Heart left ventricle (tissue), 16 donors: ENCODE measurements at regions of chr1 and their contacts with region 1.

Region 1: GRCh38 chr1:50060279-50060678 is 36.5 kb upstream of the AGBL4 start:
- DNase-seq: no peak
- ATAC-seq: no peak
- H3K4me3 ChIP-seq: no peak overlapping the region
- H3K27ac ChIP-seq: no peak overlapping the region
- H3K4me1 ChIP-seq: no peaks in the 10 kb centered on the region
- H3K27me3 ChIP-seq: no peaks in the 10 kb centered on the region
- CTCF ChIP-seq: no peak
- POLR2A ChIP-seq: no peak

Region 2: DNA sequence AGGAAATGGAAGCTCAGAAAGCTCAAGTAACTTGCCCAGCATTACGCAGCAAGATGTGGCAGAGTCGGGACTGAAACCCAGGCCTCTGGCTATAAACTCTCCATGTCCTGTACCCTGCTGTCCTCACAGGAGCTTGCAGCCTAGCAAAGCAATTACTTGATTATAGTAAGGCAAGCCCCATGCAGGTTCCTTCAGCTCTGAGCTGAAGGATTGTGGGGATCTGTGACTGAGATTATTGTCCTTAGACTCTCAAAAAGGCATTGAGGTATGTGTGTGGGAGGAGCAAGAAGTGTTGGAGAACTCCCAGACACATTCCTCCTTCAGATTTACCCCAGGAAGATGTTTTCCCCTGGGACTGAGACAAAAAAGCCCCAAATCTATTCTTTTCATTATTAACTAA is 1464.2 kb before region 1 on chr1:
- intact Hi-C with region 1: loop called in 1 of 10 experiments (anchors 10 kb)
- DNase-seq: no peak
- ATAC-seq: no peak
- H3K4me3 ChIP-seq: no peak overlapping the region
- H3K27ac ChIP-seq: no peak overlapping the region
- H3K4me1 ChIP-seq: no peaks in the 10 kb centered on the region
- H3K27me3 ChIP-seq: no peaks in the 10 kb centered on the region
- CTCF ChIP-seq: no peak
- POLR2A ChIP-seq: no peak

Region 3: GRCh38 chr1:49677706-49678105 is 382.6 kb before region 1 on chr1:
- intact Hi-C with region 1: no loop called
- DNase-seq: no peak
- ATAC-seq: no peak
- H3K4me3 ChIP-seq: no peak overlapping the region
- H3K27ac ChIP-seq: no peak overlapping the region
- H3K4me1 ChIP-seq: no peaks in the 10 kb centered on the region
- H3K27me3 ChIP-seq: no peaks in the 10 kb centered on the region
- CTCF ChIP-seq: no peak
- POLR2A ChIP-seq: no peak

Region 4: GRCh38 chr1:50329332-50329932 is 269.2 kb after region 1 on chr1:
- intact Hi-C with region 1: no loop called
- DNase-seq: no peak
- ATAC-seq: no peak
- H3K4me3 ChIP-seq: no peak overlapping the region
- H3K27ac ChIP-seq: no peak overlapping the region
- H3K4me1 ChIP-seq: peaks cover 0 to 15% (median 9%) of the 10 kb centered on the region in 12 donors
- H3K27me3 ChIP-seq: peaks cover 0 to 50% (median 9%) of the 10 kb centered on the region in 9 donors
- CTCF ChIP-seq: no peak
- POLR2A ChIP-seq: no peak